ENCODE measurements at regions of chr3 and their contacts with region 1.

Region 1: DNA sequence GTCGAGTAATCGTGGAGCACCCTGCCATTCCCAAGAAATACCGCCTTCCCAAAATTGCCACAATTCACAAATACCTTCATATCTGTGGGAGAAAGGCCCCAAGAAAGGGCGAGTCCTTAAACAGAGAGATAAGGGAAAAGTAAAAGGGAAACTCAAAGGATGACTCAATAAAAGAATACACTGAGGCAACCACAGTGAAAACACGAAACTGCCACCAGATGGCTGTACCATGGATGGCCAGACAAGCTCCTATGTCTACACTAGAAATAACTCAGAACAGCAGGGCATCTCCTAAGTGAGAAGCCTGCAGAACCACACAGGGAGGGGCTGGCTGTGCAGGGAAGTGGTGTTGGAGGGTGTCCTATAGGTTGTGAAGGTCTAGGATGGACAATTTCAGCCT is 25.0 kb downstream of the SRGAP3 start:
- DNase-seq: peak; percentile 31
- H3K4me3 Mint-ChIP-seq: no peak overlapping the region
- H3K27ac Mint-ChIP-seq: no peak overlapping the region
- H3K4me1 Mint-ChIP-seq: peaks cover 28% of the 10 kb centered on the region
- H3K27me3 Mint-ChIP-seq: no peaks in the 10 kb centered on the region

Region 2: GRCh38 chr3:8869613-8870012 is 354.9 kb before region 1 on chr3:
- CTCF ChIA-PET with region 1: no interaction called
- DNase-seq: no peak
- H3K4me3 Mint-ChIP-seq: no peak overlapping the region
- H3K27ac Mint-ChIP-seq: no peak overlapping the region
- H3K4me1 Mint-ChIP-seq: no peaks in the 10 kb centered on the region
- H3K27me3 Mint-ChIP-seq: no peaks in the 10 kb centered on the region

Region 3: DNA sequence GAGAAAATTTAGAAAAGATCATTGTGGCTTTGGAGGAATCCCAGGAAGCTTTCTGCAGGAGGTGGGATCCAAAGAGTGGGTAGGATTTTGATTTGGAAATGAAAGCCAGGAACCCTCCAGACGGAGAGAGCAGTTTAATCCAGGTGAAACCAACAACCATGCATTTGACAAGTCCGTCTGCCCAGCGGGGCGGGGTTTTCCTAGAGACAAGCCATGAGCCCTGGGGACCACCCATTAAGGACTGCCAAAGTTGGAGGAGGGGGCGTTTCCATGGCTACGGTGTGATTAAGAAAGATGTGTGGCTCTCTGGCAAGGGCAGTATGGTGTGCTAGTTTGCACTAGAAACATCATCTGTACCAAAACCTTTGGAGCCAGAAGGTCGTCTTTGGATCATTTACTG is 28.5 kb before region 1 on chr3:
- CTCF ChIA-PET with region 1: no interaction called
- DNase-seq: no peak
- H3K4me3 Mint-ChIP-seq: no peak overlapping the region
- H3K27ac Mint-ChIP-seq: no peak overlapping the region
- H3K4me1 Mint-ChIP-seq: no peaks in the 10 kb centered on the region
- H3K27me3 Mint-ChIP-seq: peaks cover 33% of the 10 kb centered on the region

Region 4: DNA sequence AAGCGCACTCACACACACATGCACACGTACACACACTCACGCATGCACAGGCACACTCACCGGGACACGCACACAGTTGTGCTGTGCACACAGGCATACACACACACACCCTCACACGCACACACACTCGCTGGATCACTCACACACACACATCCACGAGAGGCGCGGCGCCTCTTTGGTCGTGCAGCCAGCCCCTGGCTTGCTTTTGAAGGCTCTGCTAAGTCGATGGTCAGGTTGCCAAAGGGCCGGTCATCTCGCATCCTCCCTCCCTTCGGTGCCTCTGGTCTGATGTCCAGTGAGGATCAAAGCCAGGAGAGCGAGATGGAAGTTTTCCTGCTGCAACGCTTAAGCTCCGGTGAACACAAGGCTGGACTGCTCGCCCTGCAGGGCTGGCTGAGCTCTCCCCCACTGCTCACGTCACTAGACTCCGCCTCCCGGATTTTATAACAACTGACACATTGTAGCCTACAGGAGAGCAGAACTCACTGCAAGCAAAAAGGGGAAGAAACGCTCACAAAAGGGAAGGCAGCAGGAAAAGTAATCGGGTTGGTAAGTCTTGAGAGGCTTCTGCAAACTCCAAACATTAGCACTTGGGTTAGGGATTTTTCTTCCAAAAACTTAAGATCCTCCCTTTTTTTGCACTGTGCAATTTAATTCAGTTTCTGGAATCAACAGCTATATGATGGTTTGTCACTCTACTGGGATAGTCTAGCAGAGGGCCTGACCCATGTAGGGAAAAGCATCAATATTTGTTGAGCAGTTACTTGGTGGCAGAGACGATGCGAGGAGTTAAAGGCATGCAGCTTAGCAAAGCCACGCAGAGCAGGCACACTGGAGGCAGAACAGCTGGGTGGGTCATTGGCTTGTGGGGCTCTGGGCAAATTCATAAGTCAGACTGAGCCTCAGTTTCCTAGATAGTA is 25.0 kb after region 1 on chr3 and contains the start of gene SRGAP3:
- CTCF ChIA-PET with region 1: interaction called, 13 read pairs
- DNase-seq: peak; percentile 89
- H3K4me3 Mint-ChIP-seq: peak within 1 kb of the TSS; percentile 83
- H3K27ac Mint-ChIP-seq: peak within 1 kb of the TSS; percentile 58
- H3K4me1 Mint-ChIP-seq: peaks cover 30% of the 10 kb centered on the region
- H3K27me3 Mint-ChIP-seq: peaks cover 30% of the 10 kb centered on the region

Region 5: GRCh38 chr3:9362731-9363530 is 138.4 kb after region 1 on chr3 and contains the start of gene THUMPD3:
- CTCF ChIA-PET with region 1: no interaction called
- DNase-seq: peak; percentile 93
- H3K4me3 Mint-ChIP-seq: peak within 1 kb of the TSS; percentile 88
- H3K27ac Mint-ChIP-seq: peak within 1 kb of the TSS; percentile 97
- H3K4me1 Mint-ChIP-seq: peaks cover 33% of the 10 kb centered on the region
- H3K27me3 Mint-ChIP-seq: peaks cover 4% of the 10 kb centered on the region